ENCODE measurements at regions of chr11 and their contacts with region 1.

Region 1: DNA sequence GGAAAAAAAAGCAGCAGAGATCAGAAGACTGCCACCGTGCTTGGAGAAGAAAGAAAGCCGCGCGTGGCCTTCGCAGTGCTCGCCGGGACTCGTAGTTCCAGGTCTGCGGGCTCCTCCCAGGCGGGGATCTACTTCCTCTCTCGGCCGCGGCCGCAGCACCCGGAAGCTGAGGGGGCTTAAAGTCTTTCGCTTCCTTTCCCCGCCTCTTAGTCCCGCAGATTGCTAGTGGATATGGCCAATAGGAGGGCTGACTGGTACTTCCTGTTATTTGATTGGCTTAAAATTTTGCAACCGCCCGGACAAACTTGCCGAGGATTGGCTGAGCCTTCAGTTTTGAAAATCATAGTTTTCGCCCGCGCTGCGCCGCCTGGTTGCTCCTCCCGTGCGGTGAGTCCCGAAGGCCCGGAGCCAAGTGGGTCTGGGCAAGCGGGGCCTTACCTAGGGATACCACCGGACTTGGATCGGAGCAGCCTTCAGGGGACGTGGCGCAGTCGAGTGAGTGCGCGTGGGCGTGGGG is at the start of gene INCENP:
- DNase-seq: peak; percentile 87 to 98 (median 92)
- ATAC-seq: peak; percentile 99
- H3K4me3 ChIP-seq: peak within 1 kb of the TSS; percentile 87
- H3K4me3 Mint-ChIP-seq: peak within 1 kb of the TSS; percentile 97
- H3K27ac ChIP-seq: no peak within 1 kb of the TSS
- H3K27ac Mint-ChIP-seq: peak within 1 kb of the TSS; percentile 89
- H3K4me1 ChIP-seq: peaks cover 17% of the 10 kb centered on the region
- H3K4me1 Mint-ChIP-seq: peaks cover 30% of the 10 kb centered on the region
- H3K27me3 ChIP-seq: no peaks in the 10 kb centered on the region
- H3K27me3 Mint-ChIP-seq: no peaks in the 10 kb centered on the region
- CTCF ChIP-seq: no peak
- total RNA-seq, gene INCENP: 12.6 to 16.3 TPM

Region 2: GRCh38 chr11:60841797-60842667 is 1281.7 kb before region 1 on chr11 and contains the start of gene CCDC86:
- CTCF ChIA-PET with region 1: no interaction called
- POLR2A ChIA-PET with region 1: no interaction called
- intact Hi-C with region 1: loop called in 1 of 2 experiments (anchors 5 kb)
- DNase-seq: peak; percentile 96 to 100 (median 98)
- ATAC-seq: peak; percentile 96
- H3K4me3 ChIP-seq: peak within 1 kb of the TSS; percentile 99
- H3K4me3 Mint-ChIP-seq: peak within 1 kb of the TSS; percentile 78
- H3K27ac ChIP-seq: peak within 1 kb of the TSS; percentile 61 to 72
- H3K27ac Mint-ChIP-seq: peak within 1 kb of the TSS; percentile 81
- H3K4me1 ChIP-seq: peaks cover 48% of the 10 kb centered on the region
- H3K4me1 Mint-ChIP-seq: peaks cover 42% of the 10 kb centered on the region
- H3K27me3 ChIP-seq: no peaks in the 10 kb centered on the region
- H3K27me3 Mint-ChIP-seq: no peaks in the 10 kb centered on the region
- CTCF ChIP-seq: no peak
- total RNA-seq, gene CCDC86: 8.0 to 9.0 TPM

Region 3: GRCh38 chr11:61429691-61430582 is 693.8 kb before region 1 on chr11 and contains the starts of genes CPSF7 and SDHAF2:
- CTCF ChIA-PET with region 1: no interaction called
- POLR2A ChIA-PET with region 1: no interaction called
- intact Hi-C with region 1: loop called in 1 of 2 experiments (anchors 10 kb)
- DNase-seq: peak; percentile 94 to 99 (median 97)
- ATAC-seq: peak; percentile 81
- H3K4me3 ChIP-seq: peak within 1 kb of the TSS; percentile 93
- H3K4me3 Mint-ChIP-seq: peak within 1 kb of the TSS; percentile 92
- H3K27ac ChIP-seq: peak within 1 kb of the TSS; percentile 99
- H3K27ac Mint-ChIP-seq: peak within 1 kb of the TSS; percentile 99
- H3K4me1 ChIP-seq: peaks cover 41% of the 10 kb centered on the region
- H3K4me1 Mint-ChIP-seq: peaks cover 81% of the 10 kb centered on the region
- H3K27me3 ChIP-seq: no peaks in the 10 kb centered on the region
- H3K27me3 Mint-ChIP-seq: no peaks in the 10 kb centered on the region
- CTCF ChIP-seq: no peak
- total RNA-seq, gene CPSF7: 111 to 116 TPM
- total RNA-seq, gene SDHAF2: 28.7 to 33.0 TPM

Region 4: DNA sequence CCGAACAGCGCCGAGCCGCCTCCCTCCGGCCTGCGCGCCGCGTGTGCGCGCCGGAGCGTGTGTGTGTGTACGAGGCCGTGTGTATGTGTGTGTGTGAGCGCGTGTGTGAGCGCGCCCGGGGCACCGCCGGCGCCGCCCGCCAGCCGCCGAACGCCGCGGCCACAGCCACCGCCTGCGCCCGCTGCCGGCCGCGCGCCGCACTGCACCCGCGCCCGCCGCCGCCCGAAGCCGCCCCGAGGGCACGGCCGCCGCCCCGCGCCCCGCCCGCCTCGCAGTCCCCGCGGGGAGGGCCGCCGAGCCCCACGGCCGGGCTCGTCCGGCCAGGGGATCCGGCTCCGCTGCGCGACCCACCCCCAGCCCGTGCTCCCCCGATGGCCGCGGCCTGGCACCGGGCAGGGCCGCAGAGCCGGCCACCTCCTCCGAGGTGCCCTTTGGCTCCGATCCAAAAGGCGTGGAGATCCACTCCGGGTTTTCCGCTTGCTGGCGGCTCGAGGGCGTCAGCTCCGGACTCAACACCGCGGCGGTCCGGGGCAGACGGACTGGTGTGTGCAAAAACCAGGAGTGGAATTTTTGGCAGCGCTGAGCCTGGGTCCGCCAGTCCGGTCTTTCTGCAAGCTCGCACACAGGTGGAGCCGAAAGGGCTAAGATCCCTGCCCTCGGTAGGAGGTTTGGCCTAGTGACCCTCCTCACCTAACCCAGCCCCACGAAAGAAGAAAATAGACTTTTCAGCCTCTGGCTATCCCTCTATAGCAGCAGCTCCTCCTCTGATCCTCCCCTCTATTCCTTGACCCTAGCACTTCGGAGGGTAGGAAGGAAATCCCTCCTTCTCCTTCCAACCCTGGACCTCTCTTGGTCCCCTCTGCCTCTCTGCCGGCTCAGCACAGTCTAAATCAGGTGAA is 542.4 kb before region 1 on chr11 and contains the start of gene SYT7:
- CTCF ChIA-PET with region 1: no interaction called
- POLR2A ChIA-PET with region 1: no interaction called
- intact Hi-C with region 1: loop called in 1 of 2 experiments (anchors 10 kb)
- DNase-seq: peak; percentile 86 to 96 (median 94)
- ATAC-seq: peak; percentile 86
- H3K4me3 ChIP-seq: peak within 1 kb of the TSS; percentile 28
- H3K4me3 Mint-ChIP-seq: peak within 1 kb of the TSS; percentile 97
- H3K27ac ChIP-seq: no peak within 1 kb of the TSS
- H3K27ac Mint-ChIP-seq: peak within 1 kb of the TSS; percentile 78
- H3K4me1 ChIP-seq: peaks cover 19% of the 10 kb centered on the region
- H3K4me1 Mint-ChIP-seq: peaks cover 9% of the 10 kb centered on the region
- H3K27me3 ChIP-seq: peaks cover 23 to 27% of the 10 kb centered on the region in 2 experiments
- H3K27me3 Mint-ChIP-seq: peaks cover 57% of the 10 kb centered on the region
- CTCF ChIP-seq: no peak
- total RNA-seq, gene SYT7: not detected

Region 5: GRCh38 chr11:61679893-61680621 is 443.7 kb before region 1 on chr11 and contains the start of gene DAGLA:
- CTCF ChIA-PET with region 1: no interaction called
- POLR2A ChIA-PET with region 1: no interaction called
- intact Hi-C with region 1: loop called in 1 of 2 experiments (anchors 5 kb)
- DNase-seq: peak; percentile 50 to 88 (median 75)
- ATAC-seq: peak; percentile 72
- H3K4me3 ChIP-seq: peak within 1 kb of the TSS; percentile 19
- H3K4me3 Mint-ChIP-seq: peak within 1 kb of the TSS; percentile 77
- H3K27ac ChIP-seq: no peak within 1 kb of the TSS
- H3K27ac Mint-ChIP-seq: no peak within 1 kb of the TSS
- H3K4me1 ChIP-seq: peaks cover 27% of the 10 kb centered on the region
- H3K4me1 Mint-ChIP-seq: no peaks in the 10 kb centered on the region
- H3K27me3 ChIP-seq: peaks cover 3% of the 10 kb centered on the region in 2 experiments
- H3K27me3 Mint-ChIP-seq: peaks cover 24% of the 10 kb centered on the region
- CTCF ChIP-seq: peak; percentile 78
- total RNA-seq, gene DAGLA: 0.52 to 0.73 TPM

Region 6: DNA sequence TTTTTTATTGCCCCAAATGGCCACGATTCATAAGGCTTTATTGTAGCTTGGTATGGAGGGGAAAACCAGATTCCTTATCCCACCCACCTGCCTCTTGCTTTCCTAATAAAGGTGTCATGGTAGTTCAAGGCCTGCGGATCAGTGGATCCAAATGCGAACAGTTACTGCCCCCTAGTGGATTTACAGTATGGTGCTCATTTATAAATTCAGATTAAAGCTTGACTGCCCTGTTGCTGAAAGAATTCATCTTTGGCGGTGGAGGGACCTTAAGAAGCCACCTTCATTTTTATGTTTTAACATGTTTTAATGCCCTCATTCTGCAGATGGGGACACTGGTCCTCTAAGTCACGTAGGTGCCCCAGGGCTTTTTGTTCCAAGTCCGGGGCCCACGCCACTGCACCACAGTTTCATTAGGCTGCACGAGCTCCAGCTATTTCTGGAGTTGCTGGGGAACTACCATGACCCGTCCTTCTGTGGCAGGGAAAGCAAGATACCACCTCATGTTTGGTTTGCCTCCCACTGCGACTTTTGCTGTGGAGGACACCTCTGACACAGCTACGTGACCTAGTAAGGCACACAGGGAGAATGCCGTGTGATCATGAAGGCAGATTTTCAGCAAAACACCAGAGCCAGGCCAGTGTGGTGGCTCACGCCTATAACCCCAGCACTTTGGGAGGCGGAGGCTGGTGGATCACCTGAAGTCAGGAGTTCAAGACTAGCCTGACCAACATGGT is 15.5 kb before region 1 on chr11:
- CTCF ChIA-PET with region 1: interaction called, 7 read pairs
- POLR2A ChIA-PET with region 1: interaction called, 10 read pairs
- intact Hi-C with region 1: no loop called
- DNase-seq: peak in 8 of 14 experiments; percentile 19 to 82 (median 42)
- ATAC-seq: peak; percentile 62
- H3K4me3 ChIP-seq: no peak overlapping the region
- H3K4me3 Mint-ChIP-seq: peak overlapping the region; percentile 52
- H3K27ac ChIP-seq: no peak overlapping the region
- H3K27ac Mint-ChIP-seq: no peak overlapping the region
- H3K4me1 ChIP-seq: peaks cover 26% of the 10 kb centered on the region
- H3K4me1 Mint-ChIP-seq: peaks cover 11% of the 10 kb centered on the region
- H3K27me3 ChIP-seq: no peaks in the 10 kb centered on the region
- H3K27me3 Mint-ChIP-seq: no peaks in the 10 kb centered on the region
- CTCF ChIP-seq: peak; percentile 85

Region 7: DNA sequence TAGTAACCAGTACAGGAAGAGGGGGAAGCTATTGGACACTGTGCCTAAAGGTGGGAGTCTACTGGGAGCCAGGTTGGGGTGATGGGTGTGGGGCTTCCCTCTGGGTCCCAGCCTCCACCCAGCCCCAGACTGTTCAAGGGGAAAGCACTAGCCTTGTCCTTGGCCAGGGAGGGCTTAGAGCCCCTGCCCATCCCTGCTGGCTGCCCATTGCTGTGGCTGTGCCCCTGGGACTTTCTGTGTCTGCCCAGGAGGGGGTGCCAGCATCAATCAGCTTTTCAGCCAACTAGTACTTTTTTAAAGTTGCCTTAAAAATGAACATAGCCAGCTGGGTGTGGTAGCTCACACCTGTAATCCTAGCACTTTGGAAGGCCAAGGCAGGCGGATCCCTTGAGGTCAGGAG is 20.0 kb after region 1 on chr11:
- CTCF ChIA-PET with region 1: no interaction called
- POLR2A ChIA-PET with region 1: no interaction called
- intact Hi-C with region 1: no loop called
- DNase-seq: peak in 1 of 14 experiments; percentile 16
- ATAC-seq: no peak
- H3K4me3 ChIP-seq: no peak overlapping the region
- H3K4me3 Mint-ChIP-seq: no peak overlapping the region
- H3K27ac ChIP-seq: no peak overlapping the region
- H3K27ac Mint-ChIP-seq: no peak overlapping the region
- H3K4me1 ChIP-seq: no peaks in the 10 kb centered on the region
- H3K4me1 Mint-ChIP-seq: no peaks in the 10 kb centered on the region
- H3K27me3 ChIP-seq: no peaks in the 10 kb centered on the region
- H3K27me3 Mint-ChIP-seq: no peaks in the 10 kb centered on the region
- CTCF ChIP-seq: no peak

Measured in CD4-positive, alpha-beta T cell (primary cell).